Activated naive CD4-positive, alpha-beta T cell treated with anti-CD3 and anti-CD28 coated beads for 36 hours (primary cell): ENCODE measurements at regions of chr13 and their contacts with region 1.

Region 1: DNA sequence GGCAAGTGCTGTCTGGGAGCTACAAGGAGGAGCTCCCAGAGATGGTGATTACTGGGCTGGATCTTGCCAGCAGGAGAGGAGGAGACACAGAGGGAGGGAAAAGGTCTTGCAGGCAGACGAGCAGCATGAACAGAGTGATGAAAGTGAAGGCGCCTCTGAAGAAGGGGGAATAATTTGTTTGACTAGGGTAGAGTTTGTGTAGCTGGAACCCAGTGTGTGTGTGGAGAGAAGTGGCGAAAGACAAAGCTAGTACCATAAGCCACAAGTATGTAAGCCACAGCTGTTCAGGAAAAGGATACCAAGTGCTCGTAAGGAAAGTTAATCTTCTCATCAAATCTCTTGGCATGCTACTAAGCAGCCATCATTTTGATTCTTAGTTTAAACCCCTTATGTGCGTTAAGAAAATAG is 5.4 kb downstream of the FLT1 start:
- DNase-seq: no peak
- H3K4me3 Mint-ChIP-seq: no peak overlapping the region
- H3K27ac Mint-ChIP-seq: no peak overlapping the region
- H3K4me1 Mint-ChIP-seq: peaks cover 24% of the 10 kb centered on the region
- H3K27me3 Mint-ChIP-seq: peaks cover 13% of the 10 kb centered on the region

Region 2: GRCh38 chr13:28415994-28416421 is 73.5 kb before region 1 on chr13:
- CTCF ChIA-PET with region 1: no interaction called
- intact Hi-C with region 1: loop called (anchors 5 kb)
- DNase-seq: peak; percentile 27
- H3K4me3 Mint-ChIP-seq: no peak overlapping the region
- H3K27ac Mint-ChIP-seq: no peak overlapping the region
- H3K4me1 Mint-ChIP-seq: no peaks in the 10 kb centered on the region
- H3K27me3 Mint-ChIP-seq: peaks cover 2% of the 10 kb centered on the region

Region 3: GRCh38 chr13:28548872-28549271 is 59.3 kb after region 1 on chr13:
- CTCF ChIA-PET with region 1: no interaction called
- intact Hi-C with region 1: no loop called
- DNase-seq: no peak
- H3K4me3 Mint-ChIP-seq: no peak overlapping the region
- H3K27ac Mint-ChIP-seq: no peak overlapping the region
- H3K4me1 Mint-ChIP-seq: peaks cover 2% of the 10 kb centered on the region
- H3K27me3 Mint-ChIP-seq: peaks cover 13% of the 10 kb centered on the region